Activated T-helper 1 cell treated with anti-CD3 and anti-CD28 coated beads, Interleukin-12 subunit alpha, Interleukin-12 subunit beta, Interleukin-2, Interleukin-4 antibody, amounts not matched to agents 30 ng/mL and 10 ng/mL and 1 ng/mL, durations not matched to agents 14 hours and 24 hours and 36 hours (primary cell): ENCODE measurements at regions of chr4 and their contacts with region 1.

Region 1: GRCh38 chr4:10730590-10730989 is 46.0 kb upstream of the CLNK start:
- DNase-seq: no peak
- H3K4me3 Mint-ChIP-seq: peak overlapping the region; percentile 42
- H3K27ac Mint-ChIP-seq: peak overlapping the region; percentile 90
- H3K4me1 Mint-ChIP-seq: peaks cover 86% of the 10 kb centered on the region
- H3K27me3 Mint-ChIP-seq: no peaks in the 10 kb centered on the region

Region 2: DNA sequence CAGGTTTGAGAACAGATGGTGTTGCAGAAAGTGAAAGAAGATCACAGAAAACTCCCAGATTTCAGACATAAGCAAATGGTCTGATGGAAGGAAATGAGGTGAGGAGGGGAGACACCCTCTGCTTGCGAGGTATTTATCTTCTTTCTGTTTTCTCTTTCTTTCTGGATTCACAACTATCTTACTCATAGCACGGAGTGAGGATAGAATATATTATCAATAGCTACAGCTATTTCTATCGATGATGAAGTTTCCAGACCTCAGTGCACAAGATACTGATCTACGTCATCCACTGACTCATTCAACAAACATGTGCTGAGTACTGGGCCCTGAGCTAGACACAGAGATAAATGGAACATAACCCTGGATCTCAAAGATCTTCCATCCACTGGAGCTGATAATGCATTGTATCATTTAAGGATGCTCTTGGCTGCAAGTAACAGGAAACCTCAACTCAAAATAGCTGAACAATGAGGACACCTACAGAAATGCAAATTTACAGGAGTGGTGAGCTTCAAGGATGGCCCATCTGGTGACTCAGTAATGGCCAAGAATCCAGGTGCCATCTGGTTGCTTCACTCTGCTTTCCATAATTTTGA is 730.5 kb before region 1 on chr4:
- intact Hi-C with region 1: loop called (anchors 5 kb)
- DNase-seq: no peak
- H3K4me3 Mint-ChIP-seq: no peak overlapping the region
- H3K27ac Mint-ChIP-seq: peak overlapping the region; percentile 49
- H3K4me1 Mint-ChIP-seq: peaks cover 49% of the 10 kb centered on the region
- H3K27me3 Mint-ChIP-seq: no peaks in the 10 kb centered on the region

Region 3: DNA sequence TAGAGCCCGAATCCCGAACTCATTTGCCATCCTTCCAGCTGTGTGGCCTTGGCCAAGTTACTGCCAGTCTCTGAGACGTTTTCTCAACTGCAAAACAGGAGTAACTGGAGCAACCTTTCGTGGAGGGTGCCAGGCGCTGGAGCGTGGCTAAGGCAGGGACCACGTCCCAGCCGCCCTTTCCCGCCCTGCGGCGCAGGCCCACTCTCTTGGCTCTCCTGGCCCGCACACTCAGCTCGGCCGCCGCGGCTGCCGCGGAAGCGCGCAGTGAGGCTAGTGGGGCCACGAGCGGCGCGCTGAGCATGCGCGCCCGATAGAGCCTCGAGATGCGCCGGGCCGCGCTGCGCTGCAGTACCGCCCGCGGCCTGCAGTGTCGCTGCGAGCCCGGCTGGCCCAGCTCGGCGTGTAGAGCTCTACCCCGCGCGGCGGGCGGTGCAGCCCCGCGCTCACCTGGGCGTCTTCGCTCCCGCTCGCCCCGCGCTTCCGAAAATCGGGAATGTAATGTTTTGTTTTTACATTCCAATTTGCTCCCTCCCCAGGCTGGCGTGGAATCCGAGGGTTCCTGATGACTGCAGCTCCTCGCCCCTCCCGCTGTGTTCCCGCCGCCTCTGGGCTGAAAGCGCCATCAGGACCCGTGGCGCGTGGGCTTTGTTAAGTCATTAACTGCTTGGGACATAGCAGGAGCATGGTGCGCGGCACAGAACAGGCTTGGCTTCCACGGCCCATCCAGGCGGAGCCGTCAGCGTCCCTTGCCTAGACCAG is 269.3 kb before region 1 on chr4:
- intact Hi-C with region 1: loop called (anchors 5 kb)
- DNase-seq: peak; percentile 76
- H3K4me3 Mint-ChIP-seq: peak overlapping the region; percentile 77
- H3K27ac Mint-ChIP-seq: no peak overlapping the region
- H3K4me1 Mint-ChIP-seq: peaks cover 34% of the 10 kb centered on the region
- H3K27me3 Mint-ChIP-seq: peaks cover 33% of the 10 kb centered on the region

Region 4: DNA sequence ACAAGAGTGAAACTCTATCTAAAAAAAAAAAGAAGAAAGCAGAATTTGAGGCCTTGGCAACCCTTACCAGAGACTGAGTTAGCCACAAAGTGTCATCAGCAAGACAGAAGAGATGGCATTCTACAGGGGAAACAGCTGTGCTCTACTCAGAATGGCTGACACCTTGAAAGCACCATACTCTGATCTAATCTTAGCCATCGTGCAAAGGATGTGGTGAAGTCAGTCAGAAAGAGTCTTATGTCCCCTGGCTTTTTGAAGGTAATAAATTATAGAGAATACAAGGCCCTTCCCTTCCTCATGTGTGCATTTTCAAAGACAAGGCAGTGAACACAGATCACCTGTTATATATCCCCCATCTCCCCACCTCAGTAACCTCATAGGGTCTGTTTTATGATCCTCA is 59.2 kb before region 1 on chr4:
- intact Hi-C with region 1: loop called (anchors 1 kb)
- DNase-seq: peak; percentile 42
- H3K4me3 Mint-ChIP-seq: peak overlapping the region; percentile 40
- H3K27ac Mint-ChIP-seq: peak overlapping the region; percentile 78
- H3K4me1 Mint-ChIP-seq: peaks cover 35% of the 10 kb centered on the region
- H3K27me3 Mint-ChIP-seq: no peaks in the 10 kb centered on the region

Region 5: DNA sequence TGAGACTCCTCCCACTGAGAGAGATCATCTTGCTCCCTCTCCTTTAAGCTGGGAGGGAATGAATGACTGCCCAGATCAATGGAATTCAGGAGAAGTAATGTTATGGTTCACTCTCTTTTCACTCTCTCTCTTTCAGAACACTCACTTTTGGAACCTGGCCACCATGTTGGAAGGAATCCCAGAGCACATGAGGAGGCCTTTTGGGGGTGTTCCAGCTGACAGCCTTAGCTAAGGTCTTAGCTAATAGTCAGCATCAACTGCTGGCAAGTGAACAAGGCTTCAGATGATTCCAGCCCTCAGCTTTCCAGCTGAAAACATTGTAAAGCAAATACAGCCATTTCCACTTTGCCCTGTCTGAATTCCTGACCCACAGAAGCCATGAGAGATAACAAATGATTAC is 78.0 kb after region 1 on chr4:
- intact Hi-C with region 1: loop called (anchors 5 kb)
- DNase-seq: no peak
- H3K4me3 Mint-ChIP-seq: no peak overlapping the region
- H3K27ac Mint-ChIP-seq: no peak overlapping the region
- H3K4me1 Mint-ChIP-seq: peaks cover 7% of the 10 kb centered on the region
- H3K27me3 Mint-ChIP-seq: peaks cover 2% of the 10 kb centered on the region

Region 6: DNA sequence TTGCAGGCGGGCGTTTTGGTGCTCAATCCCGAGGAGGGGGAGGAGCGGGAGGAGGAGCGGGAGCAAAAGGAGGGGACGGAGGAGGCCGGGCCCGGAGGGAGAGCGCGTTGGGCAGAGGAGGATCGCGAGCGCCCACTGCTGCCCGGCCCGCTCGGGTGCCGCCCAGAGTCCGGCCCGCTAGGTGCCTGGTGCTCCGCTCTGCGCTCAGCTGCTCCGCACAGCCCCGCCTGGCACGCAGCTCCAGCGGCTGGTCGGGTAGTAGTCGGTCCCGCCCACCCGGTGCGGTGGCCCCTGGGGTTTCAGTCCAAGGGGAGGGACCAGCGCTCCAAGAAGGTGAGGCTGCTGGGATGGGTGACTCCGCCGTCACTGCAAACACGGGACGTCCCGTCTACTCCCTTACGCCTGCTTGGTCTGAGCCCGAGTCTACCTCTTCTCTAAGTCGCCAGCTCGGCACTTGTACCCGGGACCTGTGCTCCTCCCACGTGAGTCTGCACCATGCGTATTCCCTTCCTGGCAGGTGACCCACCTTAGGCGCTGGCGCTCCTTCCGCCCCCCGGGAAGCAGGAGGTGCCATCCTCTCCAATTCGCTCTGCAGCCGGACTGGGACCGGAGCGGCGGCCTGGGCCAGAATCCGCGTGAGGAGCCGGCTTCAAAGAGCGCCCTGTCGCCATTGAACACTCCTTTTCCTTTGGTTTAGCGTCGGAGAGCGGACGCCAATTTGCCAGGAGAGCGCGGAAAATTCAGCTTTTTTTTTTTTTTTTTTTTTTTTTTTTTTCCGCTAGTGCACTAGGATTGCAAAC is 698.5 kb after region 1 on chr4:
- intact Hi-C with region 1: loop called (anchors 10 kb)
- DNase-seq: peak; percentile 4
- H3K4me3 Mint-ChIP-seq: peak overlapping the region; percentile 54
- H3K27ac Mint-ChIP-seq: no peak overlapping the region
- H3K4me1 Mint-ChIP-seq: no peaks in the 10 kb centered on the region
- H3K27me3 Mint-ChIP-seq: peaks cover 54% of the 10 kb centered on the region